ENCODE measurements at regions of chr3 and their contacts with region 1.

Region 1: DNA sequence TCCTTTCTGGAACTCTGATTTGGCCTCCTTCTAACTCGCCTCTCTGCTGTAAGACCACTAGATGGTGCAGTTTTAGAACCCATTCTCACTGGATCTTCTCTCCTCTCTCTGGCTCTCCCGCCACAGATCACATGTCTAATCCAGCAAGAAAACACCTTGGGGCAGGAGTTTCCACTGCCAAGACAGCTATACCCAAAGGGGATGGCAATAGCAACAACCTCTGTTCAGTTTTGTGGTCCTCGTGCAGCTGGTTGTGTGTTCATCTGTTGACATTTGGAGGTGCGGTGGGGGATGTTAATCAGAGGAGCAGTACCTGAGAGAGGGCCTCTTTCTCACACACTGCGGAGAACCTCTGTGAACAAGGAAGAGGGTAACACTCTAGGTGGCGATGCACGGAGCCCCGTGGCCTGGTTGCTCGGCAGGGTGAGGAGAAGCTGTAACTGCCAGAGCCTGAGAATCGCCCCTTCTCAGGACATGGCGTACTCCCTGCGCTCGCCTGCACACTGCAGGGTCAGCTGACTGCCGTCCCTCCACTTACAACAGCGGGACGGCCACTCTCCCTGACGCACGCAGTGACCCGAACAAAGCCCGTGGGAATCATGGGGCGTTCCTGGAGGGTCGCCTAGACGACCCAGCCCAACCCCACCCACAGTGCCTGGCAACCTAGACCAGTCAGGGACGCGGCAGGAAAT is at the start of gene TEX55:
- DNase-seq: peak; percentile 66
- H3K4me3 ChIP-seq: no peak within 1 kb of the TSS
- H3K27ac ChIP-seq: no peak within 1 kb of the TSS
- H3K4me1 ChIP-seq: no peaks in the 10 kb centered on the region
- H3K27me3 ChIP-seq: no peaks in the 10 kb centered on the region
- CTCF ChIP-seq: peak; percentile 72
- total RNA-seq, gene TEX55: not detected in 2 replicates

Region 2: DNA sequence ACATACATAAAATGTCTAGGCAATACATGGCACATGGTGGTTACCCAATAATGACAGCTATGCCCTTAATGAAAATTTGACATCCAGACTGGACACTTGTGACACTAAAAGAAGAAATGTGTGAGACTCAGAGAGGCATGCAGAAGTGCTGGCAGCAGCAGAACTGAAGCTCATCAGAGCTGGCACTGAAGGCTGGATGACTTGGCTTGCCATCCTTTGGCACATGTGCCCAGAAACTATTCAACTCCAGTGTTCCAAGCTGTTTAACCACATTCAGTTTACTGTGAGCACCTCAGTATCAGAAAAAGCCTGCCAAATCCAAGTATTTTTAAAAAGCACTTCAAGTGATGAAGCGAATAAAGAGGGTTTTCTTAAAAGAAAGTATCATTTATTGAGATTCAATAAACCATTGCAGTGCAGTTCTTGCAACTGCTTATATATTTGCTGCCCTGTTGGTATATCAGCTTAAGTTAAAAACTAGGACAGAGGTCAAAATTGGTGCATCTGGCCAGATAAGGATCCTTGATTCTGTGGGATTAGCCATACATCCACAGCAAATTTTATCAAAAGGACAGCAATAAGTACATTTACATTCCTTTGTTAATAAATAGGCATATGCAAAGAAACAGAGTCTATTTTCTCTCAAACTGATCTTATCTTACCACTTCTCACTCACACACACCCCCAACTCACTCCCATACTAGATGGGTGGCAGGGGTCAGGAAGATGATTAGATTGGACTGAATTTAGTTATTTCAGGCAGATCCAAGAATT is 126.8 kb before region 1 on chr3:
- CTCF ChIA-PET with region 1: no interaction called
- POLR2A ChIA-PET with region 1: no interaction called
- intact Hi-C with region 1: no loop called
- DNase-seq: no peak
- H3K4me3 ChIP-seq: no peak overlapping the region
- H3K27ac ChIP-seq: no peak overlapping the region
- H3K4me1 ChIP-seq: no peaks in the 10 kb centered on the region
- H3K27me3 ChIP-seq: no peaks in the 10 kb centered on the region
- CTCF ChIP-seq: no peak

Region 3: GRCh38 chr3:119240591-119241434 is 95.2 kb after region 1 on chr3 and contains the start of gene B4GALT4:
- CTCF ChIA-PET with region 1: interaction called, 9 read pairs
- POLR2A ChIA-PET with region 1: no interaction called
- intact Hi-C with region 1: loop called (anchors 1 kb)
- DNase-seq: peak; percentile 87
- H3K4me3 ChIP-seq: peak within 1 kb of the TSS; percentile 83
- H3K27ac ChIP-seq: peak within 1 kb of the TSS; percentile 74
- H3K4me1 ChIP-seq: peaks cover 11% of the 10 kb centered on the region
- H3K27me3 ChIP-seq: no peaks in the 10 kb centered on the region
- CTCF ChIP-seq: no peak
- total RNA-seq, gene B4GALT4: 9.9 and 10.8 TPM in 2 replicates

Region 4: GRCh38 chr3:119380697-119381096 is 235.1 kb after region 1 on chr3:
- CTCF ChIA-PET with region 1: no interaction called
- POLR2A ChIA-PET with region 1: no interaction called
- intact Hi-C with region 1: loop called (anchors 10 kb)
- DNase-seq: peak; percentile 17
- H3K4me3 ChIP-seq: no peak overlapping the region
- H3K27ac ChIP-seq: no peak overlapping the region
- H3K4me1 ChIP-seq: no peaks in the 10 kb centered on the region
- H3K27me3 ChIP-seq: no peaks in the 10 kb centered on the region
- CTCF ChIP-seq: no peak